ENCODE measurements at regions of chr5 and their contacts with region 1.

Region 1: GRCh38 chr5:120442694-120443093 is 21.4 kb upstream of the PRR16 start:
- DNase-seq: peak; percentile 14
- ATAC-seq: peak; percentile 91

Region 2: GRCh38 chr5:119009131-119009530 is 1433.6 kb before region 1 on chr5:
- intact Hi-C with region 1: no loop called
- DNase-seq: no peak
- ATAC-seq: no peak

Region 3: DNA sequence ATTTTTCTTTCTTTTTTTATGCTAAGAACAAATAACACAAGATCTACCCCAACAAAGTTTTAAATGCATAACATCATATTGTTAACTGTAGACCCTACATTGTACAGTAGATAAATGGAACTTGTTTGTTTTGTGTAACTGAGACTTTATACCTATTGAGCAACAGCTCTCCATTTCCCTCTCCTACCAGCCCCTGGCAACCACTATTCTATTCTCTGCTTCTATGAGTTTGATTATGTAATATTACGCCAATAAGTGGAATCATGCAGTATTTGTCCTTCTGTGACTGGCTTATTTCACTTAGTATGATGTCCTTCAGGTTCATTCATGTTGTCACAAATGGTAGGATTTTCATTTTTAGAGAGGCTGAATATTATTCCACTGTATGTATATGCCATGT is 286.8 kb before region 1 on chr5:
- intact Hi-C with region 1: loop called (anchors 5 kb)
- DNase-seq: no peak
- ATAC-seq: no peak

Region 4: DNA sequence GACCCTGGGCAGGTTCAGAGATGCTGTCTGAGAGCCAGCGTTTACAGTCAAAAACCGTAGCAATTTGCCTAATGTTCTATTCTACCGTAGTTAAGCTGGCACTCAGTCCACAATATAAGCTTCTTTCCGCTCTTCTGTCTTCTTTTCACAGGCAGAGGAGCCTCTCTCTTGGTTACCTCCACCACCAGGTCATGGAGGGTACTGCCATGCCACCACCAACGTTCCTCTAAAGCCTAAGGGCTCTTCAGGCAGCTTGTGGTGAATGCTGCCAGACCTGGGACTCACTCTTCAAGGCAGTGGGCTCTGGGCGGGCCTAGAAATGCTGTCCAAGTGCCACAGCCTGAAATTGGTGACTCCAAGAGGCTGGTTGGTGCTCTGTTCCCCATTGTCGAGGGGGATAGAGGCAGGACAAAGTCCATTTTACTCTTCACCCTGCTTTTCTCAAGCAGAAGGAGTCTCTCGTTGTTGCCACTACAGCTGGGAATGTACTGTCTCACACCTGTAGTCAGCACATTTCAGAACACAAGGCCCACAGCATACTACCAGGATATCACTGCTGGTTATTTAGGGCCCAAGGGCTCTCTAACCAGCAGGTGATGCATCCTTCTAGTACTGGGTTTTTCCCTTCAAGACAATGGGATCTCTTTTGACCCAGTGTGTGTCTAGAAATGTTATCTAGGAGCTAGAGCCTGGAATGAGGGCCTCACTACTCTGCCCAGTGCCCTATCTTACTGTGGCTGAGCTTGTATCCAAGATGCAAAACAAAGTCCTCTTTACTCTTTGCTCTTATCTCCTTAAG is 213.9 kb before region 1 on chr5:
- intact Hi-C with region 1: no loop called
- DNase-seq: no peak
- ATAC-seq: no peak

Measured in left ventricle myocardium superior (tissue), 1 donor.